ENCODE measurements at regions of chr12 and their contacts with region 1.

Region 1: DNA sequence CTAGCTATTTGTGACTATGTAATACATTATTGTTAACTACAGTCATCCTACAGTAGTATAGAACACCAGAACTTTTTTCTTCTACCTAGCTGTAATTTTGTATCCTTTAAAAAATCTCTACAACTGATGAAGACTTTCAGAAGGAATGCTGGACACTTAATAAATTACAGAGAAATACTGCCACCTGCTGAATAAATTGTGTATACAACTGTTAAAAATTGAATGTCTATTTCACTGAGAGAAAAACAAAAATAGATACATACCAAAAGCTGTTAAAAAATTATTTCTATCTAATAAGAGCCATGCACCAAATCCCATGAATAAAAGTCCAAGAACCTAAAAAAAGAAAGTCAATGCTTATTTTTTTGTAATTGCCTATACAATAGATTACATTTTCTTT is 6.6 kb downstream of the TSPAN19 start:
- DNase-seq: peak; percentile 30
- H3K4me3 ChIP-seq: no peak overlapping the region
- H3K27ac ChIP-seq: no peak overlapping the region
- H3K4me1 ChIP-seq: no peaks in the 10 kb centered on the region
- H3K27me3 ChIP-seq: peaks cover 8 to 40% of the 10 kb centered on the region in 2 experiments
- CTCF ChIP-seq: peak; percentile 13 to 14
- POLR2A ChIP-seq: no peak

Region 2: GRCh38 chr12:84862186-84862585 is 167.3 kb before region 1 on chr12:
- CTCF ChIA-PET with region 1: interaction called, 16 read pairs
- POLR2A ChIA-PET with region 1: no interaction called
- dilution Hi-C with region 1: no loop called
- intact Hi-C with region 1: no loop called
- DNase-seq: no peak
- H3K4me3 ChIP-seq: no peak overlapping the region
- H3K27ac ChIP-seq: no peak overlapping the region
- H3K4me1 ChIP-seq: no peaks in the 10 kb centered on the region
- H3K27me3 ChIP-seq: no peaks in the 10 kb centered on the region
- CTCF ChIP-seq: no peak
- POLR2A ChIP-seq: no peak

Region 3: GRCh38 chr12:84891106-84891838 is 138.2 kb before region 1 on chr12:
- CTCF ChIA-PET with region 1: interaction called, 85 read pairs
- POLR2A ChIA-PET with region 1: no interaction called
- dilution Hi-C with region 1: no loop called
- intact Hi-C with region 1: no loop called
- DNase-seq: no peak
- H3K4me3 ChIP-seq: no peak overlapping the region
- H3K27ac ChIP-seq: no peak overlapping the region
- H3K4me1 ChIP-seq: no peaks in the 10 kb centered on the region
- H3K27me3 ChIP-seq: peaks cover 0 to 2% of the 10 kb centered on the region in 2 experiments
- CTCF ChIP-seq: no peak
- POLR2A ChIP-seq: no peak

Region 4: DNA sequence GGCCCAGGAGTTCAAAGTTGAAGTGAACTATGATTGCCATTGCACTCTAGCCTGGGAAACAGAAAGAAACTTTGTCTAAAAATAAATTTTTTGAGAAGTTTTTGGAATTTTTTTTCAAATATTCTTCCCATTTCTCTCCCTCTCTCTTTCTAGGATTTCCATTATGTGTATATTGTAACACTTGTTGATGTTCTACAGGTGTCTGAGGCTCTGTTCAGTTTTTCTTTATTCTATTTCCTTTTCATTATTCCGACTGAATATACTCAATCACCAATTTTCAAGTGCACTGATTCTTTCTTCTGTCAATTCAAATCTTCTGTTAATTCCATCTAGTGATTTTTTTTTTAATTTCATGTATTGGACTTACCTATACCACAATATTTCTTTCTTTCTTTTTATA is 68.5 kb before region 1 on chr12:
- CTCF ChIA-PET with region 1: interaction called, 13 read pairs
- POLR2A ChIA-PET with region 1: no interaction called
- dilution Hi-C with region 1: no loop called
- intact Hi-C with region 1: no loop called
- DNase-seq: no peak
- H3K4me3 ChIP-seq: no peak overlapping the region
- H3K27ac ChIP-seq: no peak overlapping the region
- H3K4me1 ChIP-seq: no peaks in the 10 kb centered on the region
- H3K27me3 ChIP-seq: no peaks in the 10 kb centered on the region
- CTCF ChIP-seq: no peak
- POLR2A ChIP-seq: no peak

Region 5: DNA sequence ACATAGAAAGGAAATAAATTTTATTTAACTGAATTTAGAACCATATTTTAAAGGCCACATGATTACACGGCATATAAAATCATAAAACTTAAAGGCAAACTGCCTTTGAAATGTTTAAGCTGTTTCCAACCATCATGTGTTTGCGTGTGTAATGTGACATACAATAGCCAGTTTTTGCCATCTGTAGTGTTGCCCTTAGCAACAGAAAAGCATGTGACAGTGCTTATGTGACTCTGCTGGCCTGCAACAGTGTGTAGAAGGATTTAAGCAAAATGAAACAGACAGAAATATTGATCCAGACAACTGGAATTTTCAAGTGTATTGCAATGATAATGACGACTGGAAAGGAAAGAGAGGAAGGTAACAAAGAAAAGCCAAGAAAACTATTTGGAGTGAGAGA is 42.9 kb before region 1 on chr12:
- CTCF ChIA-PET with region 1: interaction called, 24 read pairs
- POLR2A ChIA-PET with region 1: no interaction called
- dilution Hi-C with region 1: no loop called
- intact Hi-C with region 1: no loop called
- DNase-seq: no peak
- H3K4me3 ChIP-seq: no peak overlapping the region
- H3K27ac ChIP-seq: no peak overlapping the region
- H3K4me1 ChIP-seq: no peaks in the 10 kb centered on the region
- H3K27me3 ChIP-seq: peaks cover 0 to 3% of the 10 kb centered on the region in 2 experiments
- CTCF ChIP-seq: no peak
- POLR2A ChIP-seq: no peak

Region 6: DNA sequence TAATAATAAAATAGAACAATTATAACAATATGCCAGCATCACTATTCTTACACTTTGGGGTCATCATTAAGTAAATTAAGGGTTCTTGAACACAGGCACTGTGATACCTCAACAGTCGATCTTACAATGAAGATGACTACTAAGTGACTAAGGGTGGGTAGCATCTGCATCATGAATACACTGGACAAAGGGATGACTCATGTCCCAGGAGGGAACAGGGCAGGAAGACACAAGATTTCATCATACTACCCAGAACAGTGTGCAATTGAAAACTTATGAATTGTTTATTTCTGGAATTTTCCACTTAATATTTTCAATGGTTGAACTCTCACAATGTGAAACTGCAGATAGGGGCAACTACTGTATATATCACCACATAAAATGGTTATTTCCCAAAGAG is 13.0 kb before region 1 on chr12:
- CTCF ChIA-PET with region 1: interaction called, 12 read pairs
- POLR2A ChIA-PET with region 1: no interaction called
- dilution Hi-C with region 1: no loop called
- intact Hi-C with region 1: no loop called
- DNase-seq: peak; percentile 67
- H3K4me3 ChIP-seq: no peak overlapping the region
- H3K27ac ChIP-seq: no peak overlapping the region
- H3K4me1 ChIP-seq: peaks cover 6% of the 10 kb centered on the region
- H3K27me3 ChIP-seq: no peaks in the 10 kb centered on the region
- CTCF ChIP-seq: no peak
- POLR2A ChIP-seq: no peak